Tibial artery (tissue), 4 donors: ENCODE measurements at regions of chr2 and their contacts with region 1.

Region 1: GRCh38 chr2:69770193-69771146 is 28.5 kb downstream of the ANXA4 start:
- DNase-seq: peak; percentile 70 to 74
- H3K4me3 ChIP-seq: peak overlapping the region in 1 of 2 donors; percentile 13
- H3K27ac ChIP-seq: peak overlapping the region; percentile 81 to 83
- H3K4me1 ChIP-seq: peaks cover 0 to 99% (median 65%) of the 10 kb centered on the region in 4 donors
- H3K27me3 ChIP-seq: no peaks in the 10 kb centered on the region
- CTCF ChIP-seq: no peak

Region 2: DNA sequence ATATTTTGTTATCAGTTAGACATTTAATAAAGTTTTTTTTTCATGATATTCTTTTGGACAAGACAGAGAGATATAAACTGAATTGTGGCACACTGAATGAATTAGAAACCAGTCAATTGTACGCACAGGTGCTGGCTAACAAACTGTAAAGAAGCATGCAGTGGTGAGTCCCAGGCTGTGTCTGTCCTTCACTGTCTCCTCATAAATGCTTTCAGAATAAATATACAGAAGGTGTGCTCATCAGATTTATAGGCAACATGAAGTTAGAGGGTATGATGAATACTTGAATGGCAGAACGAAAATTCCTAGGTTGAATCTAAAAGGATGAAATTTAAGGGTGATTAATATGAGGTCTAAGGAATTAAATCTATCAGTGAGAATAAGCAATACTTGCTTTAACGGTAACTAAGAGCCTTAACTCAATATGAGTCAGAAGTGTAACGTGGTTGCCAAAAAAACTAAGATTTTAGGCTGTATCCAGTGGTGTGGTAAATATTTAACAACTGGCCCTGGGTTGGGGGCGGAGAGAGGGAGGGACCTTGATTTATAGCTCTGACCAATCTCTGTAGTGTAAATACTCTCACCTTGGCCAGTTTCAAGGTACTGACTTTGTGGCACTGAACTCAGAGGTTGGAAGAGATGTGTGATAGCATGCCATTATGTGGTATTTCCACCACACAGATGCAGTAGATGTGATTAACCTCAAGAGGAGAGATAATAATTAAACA is 85.0 kb before region 1 on chr2:
- intact Hi-C with region 1: no loop called
- DNase-seq: no peak
- H3K4me3 ChIP-seq: no peak overlapping the region
- H3K27ac ChIP-seq: no peak overlapping the region
- H3K4me1 ChIP-seq: peaks cover 0 to 5% (median 0%) of the 10 kb centered on the region in 4 donors
- H3K27me3 ChIP-seq: no peaks in the 10 kb centered on the region
- CTCF ChIP-seq: no peak

Region 3: DNA sequence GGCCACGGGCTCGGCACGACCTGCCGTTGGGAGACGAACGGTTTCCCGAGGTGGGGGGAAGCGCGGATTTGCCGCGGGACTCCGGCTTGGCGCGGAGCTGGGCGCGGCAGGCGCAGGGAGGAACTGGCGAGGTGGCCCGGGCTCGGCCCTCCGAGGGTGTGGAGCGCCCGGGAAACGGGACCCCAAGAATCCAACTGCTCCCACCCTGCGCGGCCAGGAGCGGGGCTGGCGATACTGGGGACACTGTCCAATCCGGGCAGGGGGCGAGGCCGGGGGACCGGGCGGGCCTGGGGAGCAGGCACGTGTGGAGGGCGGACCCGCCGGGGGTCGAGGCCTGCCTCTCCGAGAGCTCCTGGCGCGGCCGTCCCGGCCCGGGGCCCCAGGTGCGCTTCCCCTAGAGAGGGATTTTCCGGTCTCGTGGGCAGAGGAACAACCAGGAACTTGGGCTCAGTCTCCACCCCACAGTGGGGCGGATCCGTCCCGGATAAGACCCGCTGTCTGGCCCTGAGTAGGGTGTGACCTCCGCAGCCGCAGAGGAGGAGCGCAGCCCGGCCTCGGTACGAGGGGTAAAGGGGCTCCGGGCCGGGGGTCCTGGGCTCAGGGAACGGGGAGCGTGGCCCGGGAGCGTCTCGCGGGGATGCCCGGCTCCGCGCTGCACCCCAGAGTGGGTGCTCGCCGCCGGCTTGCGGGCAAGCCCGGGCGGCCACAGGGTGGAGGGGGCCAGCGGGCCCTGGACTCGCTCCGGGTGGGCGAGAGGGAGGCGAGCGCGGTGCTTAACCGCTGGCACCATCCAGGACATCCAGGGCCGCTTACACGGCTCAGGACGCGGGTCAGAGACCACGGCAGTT is 28.6 kb before region 1 on chr2 and contains the start of gene ANXA4:
- intact Hi-C with region 1: loop called (anchors 1 kb)
- DNase-seq: peak; percentile 89 to 93
- H3K4me3 ChIP-seq: peak within 1 kb of the TSS; percentile 93 to 94
- H3K27ac ChIP-seq: peak within 1 kb of the TSS; percentile 99
- H3K4me1 ChIP-seq: peaks cover 0 to 41% (median 22%) of the 10 kb centered on the region in 4 donors
- H3K27me3 ChIP-seq: no peaks in the 10 kb centered on the region
- CTCF ChIP-seq: no peak

Region 4: GRCh38 chr2:69858261-69858660 is 87.8 kb after region 1 on chr2:
- intact Hi-C with region 1: no loop called
- DNase-seq: no peak
- H3K4me3 ChIP-seq: no peak overlapping the region
- H3K27ac ChIP-seq: no peak overlapping the region
- H3K4me1 ChIP-seq: no peaks in the 10 kb centered on the region
- H3K27me3 ChIP-seq: no peaks in the 10 kb centered on the region
- CTCF ChIP-seq: no peak